Caki2 (cell line): ENCODE measurements at regions of chr7 and their contacts with region 1.

Region 1: GRCh38 chr7:21253740-21254687 is 173.9 kb upstream of the SP4 start:
- DNase-seq: peak; percentile 67

Region 2: DNA sequence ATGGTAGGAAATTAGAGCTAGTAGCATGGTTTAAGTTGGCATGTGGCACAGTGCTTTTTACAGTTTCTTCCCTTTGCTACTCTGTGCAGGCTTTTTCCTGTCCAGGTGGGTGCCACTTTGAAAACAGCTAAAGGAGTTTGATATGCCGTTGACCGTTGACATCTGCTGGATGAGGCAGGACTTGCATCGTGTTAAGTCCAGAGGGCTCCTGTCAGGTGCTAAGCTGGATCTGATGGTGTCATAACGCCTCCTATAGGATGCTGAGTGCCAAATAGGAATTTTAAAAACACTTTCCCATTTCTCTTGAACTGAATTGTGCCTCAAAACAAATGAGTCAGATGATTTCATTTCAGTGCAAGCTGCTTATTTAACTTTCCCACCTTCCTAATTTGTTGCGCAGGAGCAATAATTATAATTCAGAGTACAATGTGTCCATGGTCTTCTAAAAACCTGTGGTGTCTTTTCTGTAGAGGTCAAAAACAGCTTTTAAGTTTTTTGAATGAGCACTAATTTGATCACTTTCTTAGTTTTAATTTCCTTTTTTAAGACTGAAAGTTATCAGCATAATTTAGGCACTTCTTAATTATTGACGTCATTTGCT is 513.4 kb after region 1 on chr7:
- in situ Hi-C with region 1: loop called (anchors 10 kb)
- DNase-seq: peak; percentile 73